Ascending aorta (tissue), 2 donors: ENCODE measurements at regions of chr9 and their contacts with region 1.

Region 1: DNA sequence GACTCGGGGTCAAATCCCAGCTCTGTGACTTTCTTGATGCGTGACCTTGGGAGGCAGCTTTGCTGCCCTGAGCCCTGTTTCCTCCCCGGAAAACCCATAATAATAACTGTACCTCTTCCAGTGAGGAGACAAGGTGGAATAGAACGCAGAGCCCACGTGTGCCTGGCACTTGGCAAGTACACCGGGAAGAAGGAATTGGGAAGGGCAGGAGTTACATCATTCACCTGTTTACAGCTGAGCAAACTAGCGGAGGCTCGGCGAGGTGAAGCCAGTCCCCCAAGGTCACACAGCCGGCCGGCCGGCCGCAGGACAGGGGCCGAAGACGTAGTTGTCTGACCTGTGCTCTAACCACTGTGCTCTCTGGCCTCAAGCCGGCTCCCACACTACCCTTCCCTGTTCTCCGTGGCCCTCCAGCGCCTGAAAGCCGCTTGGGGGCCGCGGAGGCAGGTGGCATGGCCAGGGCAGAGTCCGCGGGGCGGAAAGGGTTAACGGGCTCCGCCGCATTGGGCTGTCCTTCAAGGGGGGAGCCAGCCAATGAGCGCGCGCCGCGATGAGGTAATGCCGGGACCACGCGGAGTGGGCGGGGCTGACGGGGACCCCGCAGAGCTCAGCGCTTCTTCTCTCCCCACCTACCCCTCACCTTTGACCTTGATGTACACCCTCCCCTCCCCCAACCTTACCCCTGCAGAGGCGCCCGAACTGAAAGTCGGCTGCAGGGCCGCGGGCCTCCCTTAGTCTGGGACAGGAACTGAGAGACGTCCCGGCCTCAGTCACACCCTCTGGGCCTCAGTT is 125.2 kb downstream of the C9orf50 start:
- DNase-seq: peak; percentile 68 to 96
- H3K4me3 ChIP-seq: peak overlapping the region; percentile 68 to 72
- H3K27ac ChIP-seq: peak overlapping the region; percentile 98 to 100
- H3K4me1 ChIP-seq: peaks cover 15 to 62% of the 10 kb centered on the region in 2 donors
- H3K27me3 ChIP-seq: no peaks in the 10 kb centered on the region
- CTCF ChIP-seq: no peak

Region 2: DNA sequence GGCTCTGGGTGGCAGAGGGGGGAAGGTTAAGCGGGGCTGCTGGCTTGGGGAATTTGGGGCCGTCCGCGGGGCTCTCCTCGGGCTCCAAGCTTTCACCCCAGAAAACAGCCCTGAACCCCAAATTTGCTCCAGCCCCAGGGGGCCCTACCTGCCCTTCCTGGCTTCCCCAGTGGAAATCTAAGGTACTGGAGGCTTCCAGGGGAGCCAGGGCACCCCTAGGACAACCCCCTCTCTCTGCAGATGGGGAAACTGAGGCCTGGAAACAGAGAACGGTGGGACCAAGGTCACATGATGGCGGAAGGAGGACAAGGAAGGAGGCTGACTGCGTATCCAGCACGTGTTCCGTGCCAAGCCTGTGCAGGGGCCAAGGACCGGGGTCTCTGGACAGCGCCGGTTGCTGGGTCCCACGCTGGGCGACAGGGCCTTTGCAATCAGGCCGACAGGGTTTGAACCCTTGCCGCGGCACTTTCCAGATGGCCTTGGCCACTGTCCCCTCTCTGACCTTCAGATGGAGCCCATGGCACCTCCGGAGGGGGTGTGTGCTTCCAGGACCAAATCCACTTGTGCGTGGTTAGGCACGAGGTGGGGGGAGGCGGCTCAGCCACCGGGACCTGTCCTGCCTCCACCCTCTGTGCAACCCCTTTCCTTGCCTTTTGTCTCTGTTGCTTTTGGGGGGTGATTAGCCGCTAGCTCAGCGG is 58.0 kb before region 1 on chr9:
- intact Hi-C with region 1: no loop called
- DNase-seq: no peak
- H3K4me3 ChIP-seq: peak overlapping the region; percentile 77 to 85
- H3K27ac ChIP-seq: peak overlapping the region; percentile 83 to 87
- H3K4me1 ChIP-seq: peaks cover 9 to 17% of the 10 kb centered on the region in 2 donors
- H3K27me3 ChIP-seq: no peaks in the 10 kb centered on the region
- CTCF ChIP-seq: peak in 1 of 3 experiments; percentile 7

Region 3: GRCh38 chr9:129550199-129550839 is 54.6 kb after region 1 on chr9:
- intact Hi-C with region 1: loop called (anchors 1 kb)
- DNase-seq: peak in 1 of 2 donors; percentile 93
- H3K4me3 ChIP-seq: peak overlapping the region; percentile 52 to 82
- H3K27ac ChIP-seq: peak overlapping the region; percentile 83 to 94
- H3K4me1 ChIP-seq: peaks cover 17 to 18% of the 10 kb centered on the region in 2 donors
- H3K27me3 ChIP-seq: no peaks in the 10 kb centered on the region
- CTCF ChIP-seq: no peak